Heart left ventricle (tissue), 16 donors: ENCODE measurements at regions of chr11 and their contacts with region 1.

Region 1: DNA sequence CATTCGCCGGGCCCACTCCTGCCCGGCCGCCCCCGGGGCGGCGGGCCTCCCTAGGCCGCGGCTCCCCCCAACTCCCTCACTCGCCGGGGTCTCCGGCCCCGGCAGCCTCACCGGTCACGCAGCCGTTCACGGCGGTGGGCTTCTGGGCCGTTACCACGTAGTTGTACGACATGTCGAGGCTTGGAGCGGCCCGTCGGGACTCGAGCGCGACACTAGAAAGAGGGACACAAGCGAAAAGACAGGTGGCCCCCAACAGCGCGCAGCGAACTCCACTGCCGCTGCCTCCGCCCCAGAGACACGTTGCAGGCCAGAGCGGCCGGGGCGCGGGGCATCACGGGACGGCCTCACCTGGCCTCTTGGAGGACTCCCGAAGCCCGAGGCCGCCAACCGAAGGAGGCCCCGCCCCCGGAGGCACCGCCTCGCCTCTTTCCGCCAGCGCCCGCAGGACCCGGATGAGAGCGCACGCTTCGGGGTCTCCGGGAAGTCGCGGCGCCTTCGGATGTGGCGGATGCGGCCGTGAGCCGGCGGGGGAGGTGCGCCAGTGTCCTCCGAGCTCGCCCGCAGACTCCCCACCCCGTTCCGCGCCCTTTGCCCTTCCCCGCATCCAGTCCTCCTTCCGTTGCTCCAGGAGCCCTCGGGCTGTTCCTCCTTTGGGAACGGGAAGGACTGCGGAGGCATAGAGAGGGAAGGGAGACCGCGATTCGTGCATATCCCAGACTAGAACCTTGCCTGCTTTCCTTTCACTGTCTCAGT is at the starts of genes DDB1 and TKFC:
- DNase-seq: peak; percentile 96 to 98 (median 97)
- ATAC-seq: peak; percentile 92 to 98 (median 96)
- H3K4me3 ChIP-seq: peak within 1 kb of the TSS; percentile 77 to 100 (median 94)
- H3K27ac ChIP-seq: peak within 1 kb of the TSS; percentile 81 to 96 (median 94)
- H3K4me1 ChIP-seq: peaks cover 0 to 52% (median 37%) of the 10 kb centered on the region in 12 donors
- H3K27me3 ChIP-seq: no peaks in the 10 kb centered on the region
- CTCF ChIP-seq: peak in 1 of 12 donors; percentile 21
- POLR2A ChIP-seq: peak in 1 of 2 donors; percentile 89
- total RNA-seq, gene DDB1: 121 to 156 (median 130) TPM
- total RNA-seq, gene TKFC: 10.0 to 31.2 (median 16.8) TPM

Region 2: DNA sequence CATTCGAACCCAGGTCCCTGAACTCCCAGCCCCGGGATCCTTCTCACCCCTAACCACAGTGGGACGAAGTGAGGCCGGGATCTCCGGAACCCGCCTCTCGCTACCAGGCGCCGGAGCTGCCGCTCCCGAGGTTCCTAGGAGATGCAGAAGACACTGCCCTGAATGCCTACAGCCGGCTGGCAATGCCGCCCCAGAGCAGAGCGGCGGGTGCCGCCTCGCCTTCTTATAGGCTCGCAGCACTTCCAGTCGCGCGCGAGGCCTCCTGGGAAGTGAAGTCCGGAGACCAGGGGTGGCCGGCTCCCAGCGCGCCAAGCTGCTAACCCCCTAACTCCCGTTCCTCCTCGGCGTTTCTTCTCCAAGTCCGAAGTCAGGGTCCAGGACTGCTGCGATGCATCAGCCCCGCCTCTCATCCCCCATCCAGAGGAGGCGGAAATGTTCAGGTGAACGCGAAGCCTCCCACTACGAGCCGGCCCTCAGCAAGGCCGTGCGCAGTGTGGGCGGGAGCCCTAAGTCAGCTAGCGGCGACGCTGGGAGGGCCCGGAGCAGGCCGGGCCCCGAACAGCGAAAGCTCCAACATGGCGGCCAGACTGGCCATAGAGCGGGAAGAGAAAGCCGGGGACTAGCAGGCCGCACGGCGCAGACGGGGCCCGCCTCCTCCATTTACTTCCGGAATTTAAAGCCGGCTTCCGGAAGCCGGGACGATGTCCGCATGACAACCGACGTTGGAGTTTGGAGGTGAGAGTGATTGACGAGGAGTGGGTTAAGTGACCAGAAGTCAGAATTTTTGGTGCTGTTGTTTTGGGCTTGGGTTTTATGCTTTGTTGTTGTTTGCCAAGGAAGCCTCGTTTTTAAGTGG is 28.9 kb after region 1 on chr11 and contains the starts of genes CYB561A3 and TMEM138:
- intact Hi-C with region 1: loop called in 3 of 10 experiments (anchors 1 to 2 kb)
- DNase-seq: peak; percentile 91 to 95 (median 94)
- ATAC-seq: peak; percentile 96 to 97 (median 97)
- H3K4me3 ChIP-seq: peak within 1 kb of the TSS; percentile 46 to 86 (median 73)
- H3K27ac ChIP-seq: peak within 1 kb of the TSS; percentile 95 to 100 (median 99)
- H3K4me1 ChIP-seq: peaks cover 0 to 55% (median 28%) of the 10 kb centered on the region in 12 donors
- H3K27me3 ChIP-seq: no peaks in the 10 kb centered on the region
- CTCF ChIP-seq: no peak
- POLR2A ChIP-seq: peak in 1 of 2 donors; percentile 79
- total RNA-seq, gene CYB561A3: 6.7 to 23.9 (median 11.9) TPM
- total RNA-seq, gene TMEM138: 15.7 to 27.0 (median 19.0) TPM

Region 3: GRCh38 chr11:61384271-61385242 is 51.6 kb after region 1 on chr11:
- intact Hi-C with region 1: loop called (anchors 1 to 2 kb)
- DNase-seq: no peak
- ATAC-seq: peak in 2 of 4 donors; percentile 14 to 43
- H3K4me3 ChIP-seq: no peak overlapping the region
- H3K27ac ChIP-seq: no peak overlapping the region
- H3K4me1 ChIP-seq: peaks cover 0 to 8% (median 0%) of the 10 kb centered on the region in 12 donors
- H3K27me3 ChIP-seq: no peaks in the 10 kb centered on the region
- CTCF ChIP-seq: no peak
- POLR2A ChIP-seq: no peak

Region 4: GRCh38 chr11:61639816-61640443 is 307.0 kb after region 1 on chr11:
- intact Hi-C with region 1: loop called in 1 of 10 experiments (anchors 10 kb)
- DNase-seq: no peak
- ATAC-seq: no peak
- H3K4me3 ChIP-seq: no peak overlapping the region
- H3K27ac ChIP-seq: no peak overlapping the region
- H3K4me1 ChIP-seq: peaks cover 0 to 6% (median 0%) of the 10 kb centered on the region in 12 donors
- H3K27me3 ChIP-seq: peaks cover 0 to 3% (median 0%) of the 10 kb centered on the region in 9 donors
- CTCF ChIP-seq: no peak
- POLR2A ChIP-seq: no peak